Activated naive CD4-positive, alpha-beta T cell treated with anti-CD3 and anti-CD28 coated beads for 36 hours (primary cell): ENCODE measurements at regions of chr10 and their contacts with region 1.

Region 1: GRCh38 chr10:68600041-68600778 is 40.1 kb downstream of the TET1 start:
- DNase-seq: peak; percentile 64
- H3K4me3 Mint-ChIP-seq: peak overlapping the region; percentile 83
- H3K27ac Mint-ChIP-seq: peak overlapping the region; percentile 84
- H3K4me1 Mint-ChIP-seq: peaks cover 28% of the 10 kb centered on the region
- H3K27me3 Mint-ChIP-seq: no peaks in the 10 kb centered on the region

Region 2: GRCh38 chr10:68560186-68560942 is 39.8 kb before region 1 on chr10 and contains the start of gene TET1:
- CTCF ChIA-PET with region 1: no interaction called
- intact Hi-C with region 1: loop called (anchors 1 kb)
- DNase-seq: peak; percentile 26
- H3K4me3 Mint-ChIP-seq: peak within 1 kb of the TSS; percentile 67
- H3K27ac Mint-ChIP-seq: no peak within 1 kb of the TSS
- H3K4me1 Mint-ChIP-seq: peaks cover 21% of the 10 kb centered on the region
- H3K27me3 Mint-ChIP-seq: peaks cover 41% of the 10 kb centered on the region
- total RNA-seq, gene TET1: 0.48 to 0.57 TPM

Region 3: DNA sequence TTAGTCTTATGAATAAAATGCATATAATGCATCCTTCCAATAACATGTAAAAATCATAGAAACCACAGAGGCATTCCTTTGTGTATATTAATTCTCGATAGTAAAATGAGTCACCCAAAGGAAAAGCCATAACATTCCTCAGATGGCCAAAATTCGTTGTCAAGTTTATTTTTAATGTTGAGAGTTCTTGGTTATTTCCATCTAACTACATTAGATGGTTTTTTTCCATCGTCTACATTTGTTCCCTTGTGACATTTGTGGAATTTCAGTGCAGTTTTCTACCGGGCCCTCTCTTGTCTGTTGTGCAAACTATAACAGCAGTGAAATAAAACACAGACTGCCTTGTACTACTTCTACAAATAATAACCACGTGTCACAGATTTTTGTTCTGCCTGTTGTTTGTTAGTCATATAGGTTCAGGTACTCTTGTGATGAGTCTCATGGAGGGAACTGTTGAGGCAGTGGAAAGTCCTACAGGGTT is 66.1 kb after region 1 on chr10:
- CTCF ChIA-PET with region 1: no interaction called
- intact Hi-C with region 1: no loop called
- DNase-seq: no peak
- H3K4me3 Mint-ChIP-seq: no peak overlapping the region
- H3K27ac Mint-ChIP-seq: no peak overlapping the region
- H3K4me1 Mint-ChIP-seq: no peaks in the 10 kb centered on the region
- H3K27me3 Mint-ChIP-seq: no peaks in the 10 kb centered on the region

Region 4: DNA sequence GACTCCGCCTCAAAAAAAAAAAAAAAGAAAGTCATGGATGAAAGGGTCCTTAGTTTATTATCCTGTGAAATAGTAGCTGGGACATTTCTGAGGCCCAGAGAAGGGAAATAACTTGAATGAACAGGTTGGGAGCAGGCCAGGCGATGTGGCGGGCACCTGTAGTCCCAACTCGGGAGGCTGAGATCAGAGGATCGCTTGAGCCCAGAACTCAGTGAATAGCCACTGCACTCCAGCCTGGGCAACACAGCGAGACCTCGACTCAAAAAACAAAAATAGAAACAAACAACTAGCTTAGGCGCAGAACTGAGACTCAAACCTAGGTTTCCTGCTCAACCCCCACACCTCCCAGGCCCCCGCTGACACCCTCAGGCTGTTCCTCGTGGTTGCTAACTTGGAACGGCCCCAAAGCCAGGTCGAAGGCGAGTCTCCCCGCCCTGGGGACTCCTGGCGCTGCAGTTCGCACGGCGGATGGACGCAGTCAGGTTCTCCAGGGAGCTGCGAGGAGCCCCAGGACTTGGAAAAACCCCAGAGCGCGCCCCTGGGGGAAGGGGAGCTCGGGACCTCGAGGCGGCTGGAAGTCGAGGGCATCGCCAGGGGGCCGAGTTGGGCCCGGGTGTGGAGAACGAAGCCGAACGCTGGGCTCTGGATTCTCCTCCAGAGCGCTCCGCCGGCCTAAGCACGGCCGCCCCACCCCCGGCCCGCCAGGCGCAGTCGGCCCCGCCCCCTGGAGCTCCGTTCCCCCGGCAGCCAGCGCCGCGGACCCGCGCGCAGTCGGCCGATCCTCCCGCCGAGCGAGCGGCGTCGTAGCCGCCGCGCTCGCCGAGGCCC is 226.8 kb after region 1 on chr10 and contains the start of gene STOX1:
- CTCF ChIA-PET with region 1: no interaction called
- intact Hi-C with region 1: loop called (anchors 5 kb)
- DNase-seq: peak; percentile 56
- H3K4me3 Mint-ChIP-seq: peak within 1 kb of the TSS; percentile 75
- H3K27ac Mint-ChIP-seq: no peak within 1 kb of the TSS
- H3K4me1 Mint-ChIP-seq: peaks cover 13% of the 10 kb centered on the region
- H3K27me3 Mint-ChIP-seq: peaks cover 2% of the 10 kb centered on the region
- total RNA-seq, gene STOX1: 0.38 to 0.42 TPM